ENCODE measurements at regions of chr11 and their contacts with region 1.

Region 1: GRCh38 chr11:119095066-119095880 is 6.4 kb downstream of the DPAGT1 start:
- DNase-seq: peak; percentile 98
- H3K4me3 ChIP-seq: peak overlapping the region; percentile 78
- H3K27me3 ChIP-seq: no peaks in the 10 kb centered on the region
- CTCF ChIP-seq: 0 out of 2 replicates have a peak, but pooled peaks have one; percentile 3

Region 2: DNA sequence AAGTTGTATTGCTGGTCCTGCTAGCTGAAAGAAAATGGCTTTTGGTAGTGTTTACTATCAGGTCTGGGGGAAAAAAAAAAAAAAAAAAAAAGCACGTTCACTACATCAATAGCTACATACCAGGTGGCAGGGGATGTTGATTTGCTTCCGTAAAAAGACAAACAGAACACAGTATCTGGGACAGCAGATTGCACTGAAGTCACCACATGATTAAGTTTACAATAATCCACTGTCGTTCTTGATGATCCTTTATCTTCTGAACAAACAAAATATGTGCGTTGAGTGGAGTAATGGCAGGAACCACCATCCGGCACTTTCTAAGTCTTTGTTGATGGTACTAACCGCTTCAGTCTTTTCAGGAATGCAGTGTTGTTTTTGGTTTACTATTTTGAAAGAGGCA is 353.0 kb before region 1 on chr11:
- CTCF ChIA-PET with region 1: no interaction called
- POLR2A ChIA-PET with region 1: no interaction called
- DNase-seq: no peak
- H3K4me3 ChIP-seq: no peak overlapping the region
- H3K27me3 ChIP-seq: no peaks in the 10 kb centered on the region
- CTCF ChIP-seq: no peak

Region 3: GRCh38 chr11:118857385-118857784 is 237.9 kb before region 1 on chr11:
- CTCF ChIA-PET with region 1: no interaction called
- POLR2A ChIA-PET with region 1: interaction called, 11 read pairs
- DNase-seq: no peak
- H3K4me3 ChIP-seq: no peak overlapping the region
- H3K27me3 ChIP-seq: no peaks in the 10 kb centered on the region
- CTCF ChIP-seq: no peak

Region 4: DNA sequence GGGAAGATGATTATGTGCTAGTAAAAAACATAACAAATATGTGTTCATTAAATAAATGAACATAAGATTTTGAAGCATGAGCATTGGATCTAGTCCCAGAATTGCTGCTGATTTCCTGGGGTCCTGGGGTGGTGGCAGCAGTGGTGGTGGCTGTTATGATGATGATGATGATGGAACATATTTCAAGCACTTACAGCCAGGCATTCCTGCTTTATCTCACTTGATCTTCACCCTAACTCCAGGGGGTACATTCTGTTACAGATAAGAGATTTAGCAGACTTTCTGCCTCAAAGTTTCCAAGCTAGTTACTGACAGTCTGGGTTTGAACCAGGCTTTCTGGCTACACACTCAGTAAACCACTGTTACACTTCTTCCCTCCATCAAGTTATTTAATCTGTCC is 71.5 kb before region 1 on chr11:
- CTCF ChIA-PET with region 1: no interaction called
- POLR2A ChIA-PET with region 1: no interaction called
- DNase-seq: no peak
- H3K4me3 ChIP-seq: no peak overlapping the region
- H3K27me3 ChIP-seq: no peaks in the 10 kb centered on the region
- CTCF ChIP-seq: no peak

Region 5: DNA sequence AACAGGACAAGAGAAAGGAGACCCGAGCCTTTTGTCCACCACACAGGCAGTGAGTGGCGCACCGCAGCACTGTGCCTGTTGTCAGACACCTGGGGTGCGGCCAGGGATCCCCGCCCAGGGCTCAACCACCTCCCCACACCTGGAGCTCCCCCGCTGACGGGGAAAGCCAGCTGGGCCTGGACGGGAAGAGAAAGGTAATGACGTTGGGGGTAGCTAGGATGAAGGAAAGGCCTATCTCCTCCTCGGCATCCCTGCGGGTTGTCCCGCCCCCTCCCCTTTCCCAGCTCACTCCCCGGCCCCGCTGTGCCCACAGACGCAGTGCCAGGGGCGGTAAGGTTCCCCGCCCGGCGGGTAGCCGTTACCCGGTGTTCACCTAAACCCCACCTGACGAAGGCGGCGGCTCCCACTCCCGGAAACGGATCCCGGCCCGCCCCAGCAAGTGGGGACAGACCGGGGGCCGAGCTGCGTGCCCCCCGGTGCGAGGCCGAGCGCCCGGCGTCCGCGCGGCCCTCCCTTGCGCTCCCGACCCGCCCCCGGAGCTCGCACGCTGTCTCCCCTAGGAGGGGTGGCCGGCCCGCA is 38.8 kb before region 1 on chr11:
- CTCF ChIA-PET with region 1: no interaction called
- POLR2A ChIA-PET with region 1: no interaction called
- DNase-seq: no peak
- H3K4me3 ChIP-seq: peak overlapping the region; percentile 87
- H3K27me3 ChIP-seq: no peaks in the 10 kb centered on the region
- CTCF ChIP-seq: no peak

Region 6: DNA sequence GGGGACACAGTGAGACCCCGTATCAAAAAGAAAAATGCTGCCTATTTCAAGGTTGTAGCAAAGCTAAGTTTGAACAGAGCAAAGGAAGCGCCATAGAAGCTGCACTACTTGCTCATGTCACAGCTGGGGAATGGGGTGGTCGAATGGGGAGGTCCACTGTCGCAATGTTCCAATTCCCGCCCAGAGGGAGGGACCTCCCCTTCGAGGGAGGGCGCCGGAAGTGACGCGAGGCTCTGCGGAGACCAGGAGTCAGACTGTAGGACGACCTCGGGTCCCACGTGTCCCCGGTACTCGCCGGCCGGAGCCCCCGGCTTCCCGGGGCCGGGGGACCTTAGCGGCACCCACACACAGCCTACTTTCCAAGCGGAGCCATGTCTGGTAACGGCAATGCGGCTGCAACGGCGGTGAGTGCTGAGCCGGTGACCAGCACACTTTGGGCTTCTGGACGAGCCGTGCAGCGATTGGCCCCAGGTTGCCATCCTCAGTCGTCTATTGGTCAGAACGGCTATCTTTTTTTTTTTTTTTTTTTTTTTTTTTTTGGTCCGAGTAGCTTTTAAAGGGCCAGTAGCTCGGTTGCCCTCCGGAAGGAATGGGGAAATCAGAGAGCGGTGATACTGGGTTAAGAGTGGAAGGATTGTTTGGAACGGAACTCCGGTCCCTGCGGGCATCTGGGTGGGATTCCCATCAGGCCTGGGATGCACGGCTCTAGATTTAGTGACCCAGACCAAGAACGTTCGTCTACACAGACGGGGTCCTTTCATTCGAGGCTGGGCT is 10.4 kb before region 1 on chr11 and contains the start of gene HMBS:
- CTCF ChIA-PET with region 1: interaction called, 14 read pairs
- POLR2A ChIA-PET with region 1: interaction called, 28 read pairs
- DNase-seq: peak; percentile 74
- H3K4me3 ChIP-seq: peak within 1 kb of the TSS; percentile 78
- H3K27me3 ChIP-seq: no peaks in the 10 kb centered on the region
- CTCF ChIP-seq: no peak
- polyA plus RNA-seq, gene HMBS: 38.4 and 54.9 TPM in 2 replicates

Region 7: GRCh38 chr11:119155733-119156492 is 60.6 kb after region 1 on chr11:
- CTCF ChIA-PET with region 1: no interaction called
- POLR2A ChIA-PET with region 1: interaction called, 19 read pairs
- DNase-seq: no peak
- H3K4me3 ChIP-seq: no peak overlapping the region
- H3K27me3 ChIP-seq: peaks cover 13% of the 10 kb centered on the region
- CTCF ChIP-seq: peak; percentile 32; the same call in 1 of the 2 replicates

Region 8: DNA sequence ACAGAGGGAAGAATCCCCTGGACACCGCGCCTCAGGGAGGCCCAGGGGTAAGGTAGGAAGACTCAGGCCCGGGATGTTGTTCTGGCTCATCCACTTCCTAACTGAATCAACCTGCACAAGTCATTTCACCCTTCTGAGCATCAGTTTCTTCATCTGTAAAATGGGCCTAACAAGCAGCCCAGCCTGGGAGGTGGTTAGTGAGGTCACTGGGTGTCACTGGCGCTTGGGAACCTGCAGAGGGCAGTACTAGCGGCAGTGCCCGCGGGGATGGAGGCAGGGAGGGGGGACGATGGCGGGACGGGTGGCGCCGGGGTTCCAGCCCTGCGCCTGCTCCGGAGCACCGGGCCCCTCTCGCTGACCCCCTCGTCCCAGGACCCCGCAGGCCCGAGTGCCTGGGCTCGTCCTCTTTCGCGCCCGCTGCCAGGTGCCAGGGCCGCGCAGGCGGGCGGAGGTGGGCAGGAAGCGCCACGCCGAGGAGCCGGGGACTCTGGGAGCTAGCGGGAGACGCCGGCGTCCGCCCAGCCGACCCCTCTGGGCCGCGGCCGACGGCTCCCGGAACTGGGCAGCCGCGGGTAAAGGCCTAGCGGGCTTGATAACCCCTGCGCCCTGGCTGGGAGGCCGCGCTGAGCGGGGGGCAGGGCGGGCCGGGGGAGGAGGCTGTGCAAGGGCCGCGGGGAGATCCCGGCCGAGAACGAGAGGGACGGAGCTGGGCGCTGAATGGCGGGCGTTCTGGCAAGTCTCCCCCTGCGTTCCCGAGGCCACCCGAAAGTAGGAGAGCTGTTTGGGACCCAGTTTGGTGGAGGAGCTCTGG is 73.4 kb after region 1 on chr11 and contains the start of gene NLRX1:
- CTCF ChIA-PET with region 1: interaction called, 3 read pairs
- POLR2A ChIA-PET with region 1: interaction called, 35 read pairs
- DNase-seq: peak; percentile 15
- H3K4me3 ChIP-seq: peak within 1 kb of the TSS; percentile 65
- H3K27me3 ChIP-seq: no peaks in the 10 kb centered on the region
- CTCF ChIP-seq: peak; percentile 96
- polyA plus RNA-seq, gene NLRX1: 12.0 and 19.4 TPM in 2 replicates

Measured in BJ (cell line).